MCF 10A (cell line): ENCODE measurements at regions of chr22 and their contacts with region 1.

Region 1: GRCh38 chr22:45831394-45831793 is 145.6 kb downstream of the WNT7B start:
- DNase-seq: peak; percentile 11
- H3K4me3 Mint-ChIP-seq: no peak overlapping the region
- H3K27ac Mint-ChIP-seq: peak overlapping the region; percentile 84
- H3K4me1 Mint-ChIP-seq: peaks cover 23% of the 10 kb centered on the region
- H3K27me3 Mint-ChIP-seq: no peaks in the 10 kb centered on the region
- CTCF ChIP-seq: peak; percentile 19

Region 2: GRCh38 chr22:45684169-45684568 is 147.2 kb before region 1 on chr22:
- CTCF ChIA-PET with region 1: no interaction called
- POLR2A ChIA-PET with region 1: no interaction called
- intact Hi-C with region 1: no loop called
- DNase-seq: no peak
- H3K4me3 Mint-ChIP-seq: no peak overlapping the region
- H3K27ac Mint-ChIP-seq: no peak overlapping the region
- H3K4me1 Mint-ChIP-seq: peaks cover 31% of the 10 kb centered on the region
- H3K27me3 Mint-ChIP-seq: no peaks in the 10 kb centered on the region
- CTCF ChIP-seq: no peak

Region 3: GRCh38 chr22:45731798-45732495 is 99.4 kb before region 1 on chr22:
- CTCF ChIA-PET with region 1: interaction called, 5 read pairs
- POLR2A ChIA-PET with region 1: interaction called, 4 read pairs
- intact Hi-C with region 1: loop called (anchors 1 kb)
- DNase-seq: peak; percentile 85
- H3K4me3 Mint-ChIP-seq: no peak overlapping the region
- H3K27ac Mint-ChIP-seq: peak overlapping the region; percentile 80
- H3K4me1 Mint-ChIP-seq: peaks cover 15% of the 10 kb centered on the region
- H3K27me3 Mint-ChIP-seq: no peaks in the 10 kb centered on the region
- CTCF ChIP-seq: peak; percentile 42

Region 4: GRCh38 chr22:45775569-45776312 is 55.7 kb before region 1 on chr22:
- CTCF ChIA-PET with region 1: no interaction called
- POLR2A ChIA-PET with region 1: no interaction called
- intact Hi-C with region 1: no loop called
- DNase-seq: no peak
- H3K4me3 Mint-ChIP-seq: no peak overlapping the region
- H3K27ac Mint-ChIP-seq: peak overlapping the region; percentile 52
- H3K4me1 Mint-ChIP-seq: peaks cover 25% of the 10 kb centered on the region
- H3K27me3 Mint-ChIP-seq: no peaks in the 10 kb centered on the region
- CTCF ChIP-seq: no peak